ENCODE measurements at regions of chr6 and their contacts with region 1.

Region 1: DNA sequence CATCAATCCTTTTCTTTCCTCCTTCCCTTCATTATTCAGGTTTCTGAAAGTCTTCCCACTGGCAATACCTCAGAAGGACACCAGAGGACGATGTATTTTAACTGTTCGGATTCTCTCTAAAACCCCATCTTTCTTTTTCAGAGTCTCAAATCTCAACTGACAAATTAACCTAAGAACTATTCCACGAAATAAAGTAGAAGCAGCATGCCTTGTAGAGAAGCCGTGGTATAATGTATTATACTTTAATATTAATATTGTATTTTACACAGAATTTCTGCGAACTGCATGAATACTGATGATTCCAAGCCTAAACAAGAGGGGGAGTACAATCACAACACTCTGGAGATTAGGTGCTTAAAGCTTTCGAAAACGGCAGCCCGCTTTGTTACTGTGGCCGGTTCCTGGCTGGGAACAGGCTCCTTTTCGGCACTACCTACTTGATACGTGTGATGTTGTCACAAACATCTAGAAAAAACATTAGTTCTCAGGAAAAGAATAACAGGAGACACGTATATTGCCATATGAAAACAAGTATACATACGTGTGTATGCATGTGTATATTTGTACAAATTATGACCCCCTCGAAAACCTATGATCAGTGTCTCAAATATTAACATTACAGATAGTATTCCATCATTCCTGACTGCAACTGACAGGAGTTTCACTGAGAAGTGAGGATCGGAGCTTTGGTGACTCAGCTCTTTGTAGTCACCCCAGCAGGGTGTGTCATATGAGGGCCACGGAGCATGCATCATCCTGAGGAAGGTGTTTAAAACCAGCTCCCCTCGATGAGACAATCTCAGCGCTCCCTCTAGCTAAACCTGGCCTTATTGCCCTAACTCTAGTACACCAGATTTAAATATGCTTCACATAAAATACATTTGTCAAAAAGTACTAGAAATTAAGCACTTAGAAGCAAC is 319.7 kb upstream of the TCF21 start:
- DNase-seq: no peak
- H3K4me3 ChIP-seq: peak overlapping the region; percentile 24 to 60
- H3K27ac ChIP-seq: no peak overlapping the region
- H3K4me1 ChIP-seq: no peaks in the 10 kb centered on the region
- H3K27me3 ChIP-seq: no peaks in the 10 kb centered on the region
- CTCF ChIP-seq: peak; percentile 84 to 97 (median 93)

Region 2: GRCh38 chr6:133159255-133159795 is 409.9 kb before region 1 on chr6:
- intact Hi-C with region 1: no loop called
- DNase-seq: no peak
- H3K4me3 ChIP-seq: no peak overlapping the region
- H3K27ac ChIP-seq: no peak overlapping the region
- H3K4me1 ChIP-seq: no peaks in the 10 kb centered on the region
- H3K27me3 ChIP-seq: no peaks in the 10 kb centered on the region
- CTCF ChIP-seq: no peak

Region 3: DNA sequence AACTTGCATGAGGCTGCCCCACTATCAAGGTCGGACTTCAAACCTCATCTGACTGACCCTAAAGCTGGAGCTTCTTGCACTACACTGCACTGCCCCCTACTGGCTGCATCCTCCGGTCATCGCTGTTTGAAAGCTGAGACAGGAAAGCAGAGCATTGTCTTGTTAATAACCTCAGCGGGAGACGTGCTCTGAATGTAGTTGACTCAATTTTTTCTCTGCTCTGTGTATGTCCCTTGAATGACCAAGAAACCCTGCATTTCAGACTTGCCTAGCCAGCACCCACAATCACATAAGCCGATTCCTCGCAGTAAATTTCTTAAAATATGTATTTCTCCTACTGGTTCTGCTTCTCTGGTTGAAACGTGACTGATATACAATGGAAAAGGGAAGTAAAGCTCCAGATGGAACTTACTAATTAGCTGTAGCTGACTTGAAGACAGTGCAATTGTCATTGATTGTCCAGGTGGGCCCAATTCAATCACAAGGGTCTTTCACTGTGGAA is 347.5 kb after region 1 on chr6:
- intact Hi-C with region 1: loop called (anchors 1 kb)
- DNase-seq: peak; percentile 32 to 92
- H3K4me3 ChIP-seq: no peak overlapping the region
- H3K27ac ChIP-seq: no peak overlapping the region
- H3K4me1 ChIP-seq: no peaks in the 10 kb centered on the region
- H3K27me3 ChIP-seq: no peaks in the 10 kb centered on the region
- CTCF ChIP-seq: peak; percentile 80 to 92 (median 84)

Region 4: DNA sequence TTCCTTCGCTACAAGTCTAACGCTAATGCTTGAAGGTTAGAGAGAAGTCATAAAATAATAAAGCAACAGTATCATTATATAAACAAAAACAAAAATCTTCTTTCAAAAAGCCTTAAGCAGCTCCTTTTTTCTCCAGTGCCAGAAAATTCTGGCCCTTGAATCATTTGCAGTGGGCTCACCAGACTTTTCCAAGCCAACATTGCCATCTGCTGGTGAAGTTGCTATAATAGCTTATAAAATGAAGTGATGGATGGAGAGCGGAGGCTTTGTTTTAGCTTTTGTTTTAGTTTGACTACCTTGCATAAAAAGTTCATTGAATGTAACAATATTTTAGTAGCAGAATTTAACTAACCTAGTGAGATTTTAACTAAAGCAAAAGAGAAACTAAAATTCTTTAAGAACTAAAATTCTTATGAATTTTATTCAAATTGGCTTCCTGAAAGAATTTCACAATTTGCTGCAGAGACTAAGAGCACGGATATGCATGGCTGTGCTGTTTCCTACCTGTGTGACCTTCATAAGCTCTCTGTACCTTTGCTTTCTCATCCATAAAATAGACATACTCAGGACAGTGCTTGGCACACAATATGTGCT is 528.0 kb after region 1 on chr6:
- intact Hi-C with region 1: loop called (anchors 2 kb)
- DNase-seq: peak in 1 of 2 donors; percentile 80
- H3K4me3 ChIP-seq: no peak overlapping the region
- H3K27ac ChIP-seq: no peak overlapping the region
- H3K4me1 ChIP-seq: no peaks in the 10 kb centered on the region
- H3K27me3 ChIP-seq: no peaks in the 10 kb centered on the region
- CTCF ChIP-seq: peak; percentile 31 to 76 (median 54)